ENCODE measurements at regions of chr9 and their contacts with region 1.

Region 1: DNA sequence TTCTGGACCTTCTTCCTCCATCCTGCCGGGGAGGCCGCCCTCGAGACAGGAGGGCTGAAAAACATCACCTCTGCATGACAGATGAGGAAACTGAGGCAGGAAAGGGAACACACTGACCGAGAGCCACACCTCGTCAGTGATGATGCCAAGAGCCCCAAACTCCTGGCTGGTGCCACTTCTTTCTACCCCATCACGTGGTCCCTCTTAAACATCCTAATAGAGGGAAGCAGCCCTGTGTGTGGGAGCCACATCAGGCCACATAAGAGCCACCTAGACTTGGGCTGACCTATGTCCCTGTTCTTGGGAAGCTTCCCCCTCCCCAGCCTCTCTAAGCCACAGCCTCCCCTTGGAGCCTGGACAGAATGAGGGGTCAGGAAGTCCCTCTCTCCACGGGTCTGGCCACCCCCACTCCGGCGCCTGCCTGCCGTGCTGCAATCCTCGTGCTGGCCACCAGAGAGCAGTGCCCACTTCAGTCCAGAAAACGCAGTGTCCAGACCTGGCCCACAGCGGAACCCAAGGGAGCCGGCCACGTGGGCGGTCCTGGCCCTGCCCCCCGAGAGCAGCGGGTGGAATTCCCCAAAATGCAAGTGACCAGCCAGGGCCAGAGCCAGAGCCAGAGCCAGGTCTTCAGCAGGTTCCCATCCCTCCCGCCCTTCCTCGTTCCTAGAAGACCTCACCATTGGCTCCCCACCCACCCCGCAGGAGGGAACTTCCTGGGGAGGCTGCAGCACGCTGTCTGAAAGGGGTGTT is 54.7 kb upstream of the SARDH start:
- DNase-seq: peak; percentile 32 to 51
- ATAC-seq: peak; percentile 79 to 85
- H3K4me3 ChIP-seq: no peak overlapping the region
- H3K27ac ChIP-seq: no peak overlapping the region
- H3K4me1 ChIP-seq: peaks cover 0 to 4% of the 10 kb centered on the region in 2 donors
- H3K27me3 ChIP-seq: no peaks in the 10 kb centered on the region
- CTCF ChIP-seq: peak; percentile 83 to 94 (median 93)
- POLR2A ChIP-seq: no peak

Region 2: DNA sequence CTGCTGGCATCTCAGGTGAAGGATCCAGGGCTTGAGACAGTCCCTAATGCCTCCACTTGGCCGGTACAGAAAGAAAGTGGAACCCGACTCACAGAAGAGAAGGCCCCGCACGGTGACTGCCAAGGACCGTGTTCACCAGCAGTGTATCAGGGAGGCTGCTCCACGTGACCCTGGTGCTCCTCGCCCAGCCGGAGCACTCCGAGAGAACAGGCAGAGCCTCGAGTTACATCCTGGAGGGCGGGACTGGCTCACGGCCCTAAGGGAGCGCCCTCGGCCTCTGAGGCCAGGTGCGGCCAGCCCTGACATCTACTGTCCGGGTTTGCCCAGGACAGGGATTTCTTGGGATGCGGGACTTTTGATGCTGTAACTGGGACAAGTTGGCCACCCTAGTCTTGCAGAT is 49.3 kb after region 1 on chr9:
- in situ Hi-C with region 1: no loop called
- intact Hi-C with region 1: loop called (anchors 1 kb)
- DNase-seq: peak in 1 of 2 donors; percentile 41
- ATAC-seq: peak in 1 of 2 donors; percentile 69
- H3K4me3 ChIP-seq: no peak overlapping the region
- H3K27ac ChIP-seq: no peak overlapping the region
- H3K4me1 ChIP-seq: no peaks in the 10 kb centered on the region
- H3K27me3 ChIP-seq: peaks cover 0 to 5% (median 2%) of the 10 kb centered on the region in 3 donors
- CTCF ChIP-seq: no peak
- POLR2A ChIP-seq: no peak

Region 3: DNA sequence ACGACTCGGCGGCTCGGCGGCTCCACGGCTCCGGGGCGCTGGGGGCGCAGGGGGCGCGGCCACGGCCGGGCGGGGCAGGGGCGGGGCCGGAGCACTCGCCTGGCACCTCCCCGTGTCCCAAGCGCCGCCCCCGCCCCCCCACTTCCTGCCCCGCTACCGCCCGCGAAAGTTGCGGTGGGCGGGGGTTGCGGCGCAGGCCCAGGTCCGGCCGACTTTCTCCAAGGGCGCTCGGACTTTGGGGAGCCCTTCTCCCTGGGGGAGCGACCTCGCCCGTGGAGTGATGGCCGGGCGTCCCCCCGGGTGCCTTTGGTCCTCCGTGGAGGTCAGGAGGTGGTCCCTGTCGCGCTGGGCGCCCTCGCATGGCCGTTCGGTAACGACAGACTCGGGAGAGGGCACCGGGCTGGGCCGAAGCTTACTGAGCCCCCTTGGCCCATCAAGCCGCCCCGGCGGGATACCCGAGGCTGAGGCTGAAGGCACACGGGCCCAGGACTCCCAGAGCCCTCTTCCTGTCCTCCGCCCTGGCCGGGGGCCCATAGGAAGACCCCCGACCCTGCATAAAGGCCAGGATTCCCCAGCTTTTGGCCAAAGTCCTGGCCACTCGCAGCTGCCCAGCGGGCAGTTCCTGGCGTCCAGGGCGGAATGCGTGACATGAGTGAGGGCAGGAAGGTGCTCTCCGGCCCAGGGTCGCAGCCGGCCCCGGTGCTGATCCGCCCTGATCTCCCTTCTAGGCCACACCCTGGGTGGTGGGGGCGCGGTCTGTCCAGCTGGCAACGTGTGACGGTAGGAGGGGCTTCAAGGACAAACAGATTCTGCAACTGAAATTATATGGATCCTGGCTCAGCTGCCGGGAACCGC is 200.1 kb after region 1 on chr9:
- in situ Hi-C with region 1: loop called (anchors 5 to 10 kb)
- intact Hi-C with region 1: loop called (anchors 1 kb)
- DNase-seq: peak; percentile 47 to 63
- ATAC-seq: peak; percentile 53 to 57
- H3K4me3 ChIP-seq: peak overlapping the region; percentile 64 to 80 (median 72)
- H3K27ac ChIP-seq: peak overlapping the region; percentile 74 to 83 (median 77)
- H3K4me1 ChIP-seq: peaks cover 9 to 20% of the 10 kb centered on the region in 2 donors
- H3K27me3 ChIP-seq: peaks cover 11 to 33% (median 33%) of the 10 kb centered on the region in 3 donors
- CTCF ChIP-seq: peak in 1 of 5 experiments; percentile 21
- POLR2A ChIP-seq: peak; percentile 14 to 15